ENCODE measurements at regions of chr2 and their contacts with region 1.

Region 1: GRCh38 chr2:84704505-84705244 is 176.2 kb downstream of the TRABD2A start:
- DNase-seq: no peak

Region 2: DNA sequence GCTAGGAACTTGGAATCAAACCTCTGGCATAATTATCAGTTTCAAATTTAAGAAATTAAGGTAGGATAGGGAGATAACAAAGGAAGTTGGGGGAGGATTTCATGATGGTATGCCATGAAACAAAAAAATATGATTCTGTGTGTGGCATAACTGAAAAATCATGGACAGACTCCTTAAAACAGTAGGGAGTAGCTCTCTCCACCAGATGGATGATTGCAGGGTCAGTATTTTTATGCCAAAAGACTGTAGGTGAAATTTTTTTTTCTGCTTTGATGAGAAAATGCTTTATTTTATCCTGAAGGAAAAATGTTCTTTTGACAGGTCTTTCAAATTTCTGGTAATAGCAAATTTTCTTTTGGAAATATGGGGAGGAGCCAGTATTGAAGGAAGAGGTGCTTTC is 81.9 kb after region 1 on chr2:
- in situ Hi-C with region 1: loop called (anchors 5 kb)
- DNase-seq: peak; percentile 72